ENCODE measurements at regions of chr7 and their contacts with region 1.

Region 1: DNA sequence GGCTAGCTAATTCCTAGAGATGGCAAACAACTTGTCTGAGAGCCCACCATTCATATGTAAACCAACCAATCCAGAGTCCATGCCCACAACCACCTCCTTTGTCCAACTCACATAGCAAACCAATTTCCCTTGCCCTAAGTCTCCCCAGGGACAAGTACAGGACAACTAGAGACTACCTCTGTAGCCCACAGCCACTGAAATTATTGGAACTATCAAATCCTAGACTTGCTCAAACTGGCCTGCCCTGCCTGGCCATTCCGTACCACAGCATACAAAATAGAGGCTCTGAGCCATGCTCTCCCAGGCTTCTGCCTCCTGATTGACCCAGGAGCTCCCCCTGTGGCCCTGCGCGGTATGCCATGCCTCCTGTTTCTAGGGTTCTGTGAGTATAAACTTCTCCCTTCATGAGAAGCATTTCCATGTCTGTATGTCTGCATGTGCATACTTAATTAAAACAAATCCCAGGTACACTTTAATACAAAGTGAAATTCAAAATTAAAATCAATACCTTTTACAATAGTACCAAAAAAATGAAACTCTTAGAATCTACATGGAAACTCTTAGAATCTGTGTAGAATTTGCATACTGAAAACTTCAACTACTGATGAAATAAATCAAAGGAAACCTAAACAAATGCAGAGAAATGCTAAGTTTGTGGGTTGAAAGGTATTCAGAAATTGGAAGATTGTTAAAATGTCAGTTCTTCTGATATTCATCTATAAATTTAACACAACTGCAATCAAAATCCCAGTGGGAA is 4.0 kb upstream of the HECW1 start:
- DNase-seq: peak in 1 of 2 experiments; percentile 98
- H3K4me3 ChIP-seq: peak overlapping the region in 2 of 4 experiments; percentile 26 to 44; a peak in 2 of 8 replicates
- H3K27ac ChIP-seq: peak overlapping the region; percentile 80; the same call in 1 of the 2 replicates
- H3K4me1 ChIP-seq: peaks cover 0 to 17% (median 2%) of the 10 kb centered on the region in 4 experiments; a peak in 5 of 7 replicates
- H3K27me3 ChIP-seq: peaks cover 0 to 7% (median 3%) of the 10 kb centered on the region in 4 experiments; a peak in 2 of 7 replicates
- CTCF ChIP-seq: peak; percentile 80 to 97 (median 91)
- EP300 ChIP-seq: no peak
- POLR2A ChIP-seq: peak in 1 of 2 experiments; percentile 49; a peak in 1 of 3 replicates
- RAD21 ChIP-seq: peak; percentile 78 to 85

Region 2: GRCh38 chr7:42993038-42993437 is 115.4 kb before region 1 on chr7:
- CTCF ChIA-PET with region 1: interaction called, 13 read pairs
- POLR2A ChIA-PET with region 1: no interaction called
- DNase-seq: peak in 1 of 2 experiments; percentile 31
- H3K4me3 ChIP-seq: no peak overlapping the region
- H3K27ac ChIP-seq: no peak overlapping the region
- H3K4me1 ChIP-seq: peaks cover 0 to 13% (median 3%) of the 10 kb centered on the region in 4 experiments; a peak in 2 of 7 replicates
- H3K27me3 ChIP-seq: no peaks in the 10 kb centered on the region
- CTCF ChIP-seq: peak; percentile 32 to 70 (median 47)
- EP300 ChIP-seq: no peak
- POLR2A ChIP-seq: no peak
- RAD21 ChIP-seq: peak; percentile 56 to 65

Region 3: DNA sequence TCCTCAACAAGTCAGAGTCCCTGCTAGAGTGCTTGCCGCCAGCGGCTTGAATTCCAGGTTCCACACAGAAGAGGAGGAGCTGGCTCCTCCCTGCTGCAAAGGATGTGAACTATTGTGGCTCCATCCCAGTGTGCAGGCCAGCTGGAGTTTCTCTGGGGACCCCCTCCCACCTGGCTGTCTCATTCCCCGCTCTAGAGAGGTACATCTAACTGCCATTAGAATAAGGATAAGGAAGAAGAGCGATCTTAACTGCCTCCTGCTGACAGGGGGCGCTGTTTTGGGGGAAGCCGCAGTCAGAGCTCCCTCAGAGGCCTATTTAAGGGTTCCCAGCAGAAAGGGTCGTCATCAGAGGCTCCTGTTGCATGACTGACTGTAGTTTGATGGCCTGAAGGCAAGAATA is 36.8 kb before region 1 on chr7:
- CTCF ChIA-PET with region 1: interaction called, 38 read pairs
- POLR2A ChIA-PET with region 1: interaction called, 5 read pairs
- DNase-seq: peak; percentile 69 to 90
- H3K4me3 ChIP-seq: no peak overlapping the region
- H3K27ac ChIP-seq: no peak overlapping the region
- H3K4me1 ChIP-seq: peaks cover 0 to 3% (median 1%) of the 10 kb centered on the region in 4 experiments; a peak in 3 of 7 replicates
- H3K27me3 ChIP-seq: no peaks in the 10 kb centered on the region
- CTCF ChIP-seq: peak; percentile 66 to 89 (median 77)
- EP300 ChIP-seq: no peak
- POLR2A ChIP-seq: no peak
- RAD21 ChIP-seq: peak; percentile 56 to 75

Region 4: GRCh38 chr7:43083106-43083505 is 25.3 kb before region 1 on chr7:
- CTCF ChIA-PET with region 1: interaction called, 38 read pairs
- POLR2A ChIA-PET with region 1: interaction called, 5 read pairs
- DNase-seq: no peak
- H3K4me3 ChIP-seq: no peak overlapping the region
- H3K27ac ChIP-seq: no peak overlapping the region
- H3K4me1 ChIP-seq: peaks cover 0 to 3% (median under 1%) of the 10 kb centered on the region in 4 experiments; a peak in 2 of 7 replicates
- H3K27me3 ChIP-seq: no peaks in the 10 kb centered on the region
- CTCF ChIP-seq: no peak
- EP300 ChIP-seq: no peak
- POLR2A ChIP-seq: no peak
- RAD21 ChIP-seq: no peak

Region 5: DNA sequence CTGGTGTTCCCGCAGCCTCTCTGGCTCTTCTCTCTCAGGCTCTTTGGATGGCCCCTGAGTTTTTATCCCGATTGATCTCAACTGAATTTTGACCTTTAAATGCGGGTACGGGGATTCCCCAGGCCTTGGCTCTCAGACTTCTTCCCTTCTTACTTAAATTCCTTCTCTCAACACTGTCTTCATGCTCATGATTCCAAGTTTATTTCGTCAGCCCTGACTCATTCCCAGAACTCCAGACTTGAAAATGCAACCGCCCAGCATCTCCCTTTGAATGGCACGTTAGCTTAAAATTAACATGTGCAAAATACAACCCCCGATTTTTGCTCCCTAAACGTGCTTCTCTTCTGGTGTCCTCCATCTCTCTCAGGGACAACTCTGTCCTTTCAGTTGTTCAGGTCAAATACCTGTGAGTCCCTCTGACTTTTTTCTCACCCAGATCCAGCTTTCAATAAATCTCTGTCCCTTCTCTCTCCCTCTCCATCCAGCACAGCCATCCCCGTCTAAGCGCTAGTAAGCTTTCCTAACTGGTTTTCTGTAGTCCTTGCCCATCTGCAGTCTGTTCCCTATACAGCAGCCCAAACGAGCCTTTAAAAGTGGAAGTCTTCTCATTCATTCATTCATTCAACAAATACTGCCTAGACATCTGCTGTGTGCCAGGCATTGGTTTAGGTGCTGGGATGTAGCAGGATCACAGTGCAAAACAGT is 11.1 kb after region 1 on chr7:
- CTCF ChIA-PET with region 1: interaction called, 24 read pairs
- POLR2A ChIA-PET with region 1: interaction called, 5 read pairs
- DNase-seq: no peak
- H3K4me3 ChIP-seq: no peak overlapping the region
- H3K27ac ChIP-seq: no peak overlapping the region
- H3K4me1 ChIP-seq: peaks cover 4 to 15% (median 7%) of the 10 kb centered on the region in 4 experiments; a peak in 6 of 7 replicates
- H3K27me3 ChIP-seq: peaks cover 0 to 2% (median 0%) of the 10 kb centered on the region in 4 experiments; a peak in 1 of 7 replicates
- CTCF ChIP-seq: no peak
- EP300 ChIP-seq: no peak
- POLR2A ChIP-seq: no peak
- RAD21 ChIP-seq: no peak

Region 6: GRCh38 chr7:43135129-43135528 is 26.7 kb after region 1 on chr7:
- CTCF ChIA-PET with region 1: interaction called, 13 read pairs
- POLR2A ChIA-PET with region 1: interaction called, 4 read pairs
- DNase-seq: no peak
- H3K4me3 ChIP-seq: peak overlapping the region in 1 of 4 experiments; percentile 3; a peak in 1 of 8 replicates
- H3K27ac ChIP-seq: no peak overlapping the region
- H3K4me1 ChIP-seq: peaks cover 6 to 16% (median 13%) of the 10 kb centered on the region in 4 experiments; a peak in 6 of 7 replicates
- H3K27me3 ChIP-seq: no peaks in the 10 kb centered on the region
- CTCF ChIP-seq: no peak
- EP300 ChIP-seq: no peak
- POLR2A ChIP-seq: no peak
- RAD21 ChIP-seq: no peak

Region 7: GRCh38 chr7:43553999-43554398 is 445.6 kb after region 1 on chr7:
- CTCF ChIA-PET with region 1: no interaction called
- POLR2A ChIA-PET with region 1: no interaction called
- DNase-seq: no peak
- H3K4me3 ChIP-seq: no peak overlapping the region
- H3K27ac ChIP-seq: no peak overlapping the region
- H3K4me1 ChIP-seq: peaks cover 0 to 2% (median under 1%) of the 10 kb centered on the region in 4 experiments; a peak in 2 of 7 replicates
- H3K27me3 ChIP-seq: no peaks in the 10 kb centered on the region
- CTCF ChIP-seq: no peak
- EP300 ChIP-seq: no peak
- POLR2A ChIP-seq: no peak
- RAD21 ChIP-seq: no peak

Measured in H1 (cell line).